ENCODE measurements at regions of chr9 and their contacts with region 1.

Region 1: GRCh38 chr9:17185481-17186029 is 50.7 kb downstream of the CNTLN start:
- DNase-seq: no peak
- H3K4me3 ChIP-seq: no peak overlapping the region
- H3K27ac ChIP-seq: no peak overlapping the region
- H3K4me1 ChIP-seq: no peaks in the 10 kb centered on the region
- H3K27me3 ChIP-seq: no peaks in the 10 kb centered on the region
- CTCF ChIP-seq: no peak
- EP300 ChIP-seq: no peak
- POLR2A ChIP-seq: no peak

Region 2: DNA sequence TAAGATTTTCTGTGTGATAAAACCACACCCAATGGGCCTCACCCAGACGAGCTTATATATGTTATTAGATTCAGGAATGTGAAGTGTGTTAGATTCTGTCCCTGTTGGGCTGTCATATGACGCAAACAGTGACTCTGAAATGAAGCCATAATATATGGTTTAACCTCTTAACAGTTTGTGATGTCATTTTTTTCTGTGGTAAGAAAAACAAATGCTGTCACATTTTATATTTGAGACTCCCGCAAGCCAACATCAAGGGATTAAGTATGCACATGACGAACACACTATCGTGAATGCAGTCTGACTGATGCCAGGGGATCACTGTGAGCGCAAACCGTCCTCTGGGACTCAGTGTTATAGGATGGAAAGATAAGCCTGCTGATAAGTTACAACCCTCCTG is 715.1 kb after region 1 on chr9:
- in situ Hi-C with region 1: no loop called
- intact Hi-C with region 1: loop called (anchors 5 kb)
- DNase-seq: no peak
- H3K4me3 ChIP-seq: no peak overlapping the region
- H3K27ac ChIP-seq: no peak overlapping the region
- H3K4me1 ChIP-seq: peaks cover 0 to 8% (median 4%) of the 10 kb centered on the region in 4 donors
- H3K27me3 ChIP-seq: peaks cover under 1% of the 10 kb centered on the region
- CTCF ChIP-seq: no peak
- EP300 ChIP-seq: no peak
- POLR2A ChIP-seq: no peak